OCI-LY7 (cell line): ENCODE measurements at regions of chr2 and their contacts with region 1.

Region 1: DNA sequence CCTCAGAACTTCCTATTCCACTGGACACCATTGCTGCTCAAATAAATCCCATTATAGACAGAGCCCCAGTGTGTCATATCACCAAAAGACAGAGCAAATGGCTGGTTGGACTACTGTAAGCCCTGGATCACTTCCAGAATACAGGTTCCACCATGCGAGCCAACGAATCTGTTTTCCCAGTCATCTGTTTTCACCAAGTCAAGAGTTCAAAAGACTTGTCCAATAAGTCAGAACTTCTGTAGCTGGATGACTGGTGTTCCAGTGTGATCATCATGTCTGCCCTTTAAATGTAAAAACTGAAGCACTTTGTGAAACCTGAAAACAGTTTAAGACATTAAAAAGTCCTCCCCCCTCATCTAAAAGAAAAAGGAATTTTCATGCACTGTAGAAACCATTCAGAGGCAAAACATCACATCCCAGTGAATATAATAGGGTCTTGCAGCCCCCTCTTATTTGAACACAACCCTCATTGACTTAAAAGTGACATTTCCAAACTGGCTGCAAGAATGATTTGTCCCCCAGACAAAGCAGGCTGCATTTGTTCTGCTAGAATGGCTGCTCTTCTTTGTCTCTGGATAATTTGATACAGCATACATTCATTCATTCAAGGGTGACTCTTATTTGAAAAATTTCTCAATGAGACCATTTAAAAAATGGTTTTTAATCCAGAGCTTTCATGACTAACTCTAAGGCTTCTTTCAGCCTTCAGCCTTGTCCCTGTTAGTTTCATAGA is 64.6 kb upstream of the TANC1 start:
- DNase-seq: no peak
- H3K4me3 ChIP-seq: no peak overlapping the region
- H3K27ac ChIP-seq: no peak overlapping the region
- H3K4me1 ChIP-seq: no peaks in the 10 kb centered on the region
- CTCF ChIP-seq: no peak

Region 2: GRCh38 chr2:158755310-158756087 is 148.4 kb before region 1 on chr2:
- CTCF ChIA-PET with region 1: no interaction called
- POLR2A ChIA-PET with region 1: no interaction called
- intact Hi-C with region 1: no loop called
- DNase-seq: no peak
- H3K4me3 ChIP-seq: no peak overlapping the region
- H3K27ac ChIP-seq: no peak overlapping the region
- H3K4me1 ChIP-seq: no peaks in the 10 kb centered on the region
- CTCF ChIP-seq: peak; percentile 67

Region 3: DNA sequence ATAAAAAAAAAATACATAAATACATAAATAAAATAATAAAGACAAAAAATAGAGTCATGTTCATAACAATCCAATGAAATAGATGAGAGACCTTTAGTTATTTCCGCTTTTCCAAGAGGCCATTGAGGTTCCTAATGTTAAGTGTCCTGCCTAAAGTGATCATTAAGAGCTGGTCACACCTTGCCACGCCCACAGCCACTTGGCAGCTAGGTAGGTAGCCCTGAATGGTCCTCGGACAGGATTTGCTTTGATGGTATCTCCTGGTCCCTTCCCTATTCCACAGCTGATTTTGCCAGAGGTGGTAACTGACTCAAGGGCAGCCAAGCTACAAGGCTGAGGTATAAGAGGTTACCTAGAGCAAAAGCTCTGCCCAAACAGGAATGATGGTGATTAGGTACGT is 40.1 kb after region 1 on chr2:
- CTCF ChIA-PET with region 1: no interaction called
- POLR2A ChIA-PET with region 1: no interaction called
- intact Hi-C with region 1: no loop called
- DNase-seq: no peak
- H3K4me3 ChIP-seq: no peak overlapping the region
- H3K27ac ChIP-seq: no peak overlapping the region
- H3K4me1 ChIP-seq: no peaks in the 10 kb centered on the region
- CTCF ChIP-seq: no peak

Region 4: DNA sequence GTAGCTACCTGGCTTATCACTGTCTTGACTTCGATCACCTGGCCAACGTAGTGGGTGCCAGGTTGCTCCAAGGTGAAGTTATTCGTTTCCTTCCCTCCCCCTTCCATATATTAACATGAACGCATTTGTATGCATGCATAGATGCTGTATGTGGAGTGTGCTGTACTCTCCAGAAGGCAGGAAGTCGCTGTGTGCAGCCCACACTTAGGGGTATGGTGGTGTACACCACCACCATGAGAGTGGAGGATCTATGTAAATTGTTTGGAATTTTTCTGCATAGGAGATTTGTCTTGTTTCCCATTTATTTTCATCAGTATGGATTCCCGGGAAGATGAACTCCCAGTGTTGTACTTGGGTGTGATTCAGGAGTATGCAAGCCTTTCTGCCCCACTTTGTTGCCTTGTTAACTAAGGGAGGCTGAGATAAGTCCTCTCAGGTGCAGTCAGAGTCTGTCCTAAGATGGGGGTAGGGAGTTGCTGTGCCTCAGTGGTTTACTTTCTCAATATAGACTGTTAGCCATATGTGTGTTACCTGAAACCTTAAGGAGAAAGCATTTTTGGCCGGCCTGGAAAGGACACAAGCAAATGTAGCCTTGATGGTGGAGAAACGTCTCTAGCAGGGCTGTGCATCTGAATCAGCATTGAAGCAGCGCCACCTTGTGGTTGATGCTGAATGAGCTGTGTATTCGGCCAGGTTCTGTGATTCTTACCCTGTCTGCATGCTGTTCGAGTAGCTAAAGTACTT is 214.4 kb after region 1 on chr2:
- CTCF ChIA-PET with region 1: no interaction called
- POLR2A ChIA-PET with region 1: no interaction called
- intact Hi-C with region 1: loop called (anchors 1 kb)
- DNase-seq: peak; percentile 61
- H3K4me3 ChIP-seq: no peak overlapping the region
- H3K27ac ChIP-seq: no peak overlapping the region
- H3K4me1 ChIP-seq: no peaks in the 10 kb centered on the region
- CTCF ChIP-seq: peak; percentile 92